Naive thymus-derived CD4-positive, alpha-beta T cell (primary cell): ENCODE measurements at regions of chr17 and their contacts with region 1.

Region 1: GRCh38 chr17:42388381-42389134 is at the start of gene STAT3:
- DNase-seq: peak; percentile 100
- ATAC-seq: peak; percentile 93
- H3K4me3 ChIP-seq: peak within 1 kb of the TSS; percentile 65
- H3K4me3 Mint-ChIP-seq: peak within 1 kb of the TSS; percentile 87 to 99 (median 96)
- H3K27ac ChIP-seq: peak within 1 kb of the TSS; percentile 94
- H3K27ac Mint-ChIP-seq: peak within 1 kb of the TSS; percentile 99 to 100 (median 100)
- H3K4me1 ChIP-seq: peaks cover 13 to 20% of the 10 kb centered on the region in 2 donors
- H3K4me1 Mint-ChIP-seq: peaks cover 35 to 59% (median 48%) of the 10 kb centered on the region in 7 donors
- H3K27me3 ChIP-seq: no peaks in the 10 kb centered on the region
- H3K27me3 Mint-ChIP-seq: peaks cover 0 to 3% (median 0%) of the 10 kb centered on the region in 5 donors
- total RNA-seq, gene STAT3: 133 to 275 (median 231) TPM

Region 2: DNA sequence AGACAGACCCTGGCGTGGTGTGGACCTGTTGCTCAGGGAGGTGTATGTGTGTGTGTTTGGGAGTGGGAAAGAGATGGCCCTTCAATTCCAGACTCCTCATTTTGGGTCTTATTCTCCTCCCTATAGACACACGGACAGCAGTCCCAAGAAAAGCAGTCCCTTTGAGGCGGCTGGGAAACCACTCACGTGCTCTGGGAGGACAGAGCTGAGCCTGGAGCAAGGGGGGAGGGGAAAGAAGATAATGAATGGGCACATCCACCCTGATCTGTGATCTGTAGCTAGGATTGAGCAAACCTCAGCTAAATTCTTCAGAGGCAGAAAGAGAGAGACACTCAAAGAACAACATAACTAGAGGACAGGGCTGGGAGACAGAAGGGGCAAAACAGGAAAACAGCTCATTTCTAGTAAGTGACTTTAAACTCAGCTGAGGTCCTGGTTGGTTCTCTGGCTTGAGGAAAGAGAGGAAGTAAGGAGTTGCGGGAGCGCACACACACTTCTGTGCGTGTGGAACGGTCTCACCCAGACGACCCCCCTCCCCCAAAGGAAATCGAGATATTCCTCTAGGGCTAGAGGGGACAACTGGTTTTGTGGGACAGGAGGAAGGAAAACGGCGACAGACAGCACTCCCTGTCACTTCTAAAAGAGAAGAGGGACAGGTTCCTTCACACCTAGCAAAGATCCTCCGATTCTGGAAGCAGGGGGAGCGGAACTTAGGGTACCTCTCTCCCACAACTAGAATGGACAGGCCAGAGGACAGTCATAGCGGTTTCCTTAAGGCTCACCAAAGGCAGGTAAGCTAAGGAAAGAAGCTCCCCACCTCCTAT is 234.4 kb before region 1 on chr17:
- CTCF ChIA-PET with region 1: no interaction called
- POLR2A ChIA-PET with region 1: no interaction called
- intact Hi-C with region 1: loop called in 1 of 2 experiments (anchors 1 kb)
- DNase-seq: no peak
- ATAC-seq: no peak
- H3K4me3 ChIP-seq: peak overlapping the region; percentile 76
- H3K4me3 Mint-ChIP-seq: peak overlapping the region; percentile 81 to 97 (median 94)
- H3K27ac ChIP-seq: peak overlapping the region; percentile 94
- H3K27ac Mint-ChIP-seq: peak overlapping the region; percentile 79 to 96 (median 93)
- H3K4me1 ChIP-seq: peaks cover 10 to 16% of the 10 kb centered on the region in 2 donors
- H3K4me1 Mint-ChIP-seq: peaks cover 21 to 43% (median 37%) of the 10 kb centered on the region in 7 donors
- H3K27me3 ChIP-seq: no peaks in the 10 kb centered on the region
- H3K27me3 Mint-ChIP-seq: no peaks in the 10 kb centered on the region

Region 3: GRCh38 chr17:42276359-42276608 is 112.3 kb before region 1 on chr17 and contains the start of gene STAT5B:
- CTCF ChIA-PET with region 1: no interaction called
- POLR2A ChIA-PET with region 1: interaction called, 7 read pairs
- intact Hi-C with region 1: loop called in 1 of 2 experiments (anchors 2 kb)
- DNase-seq: peak in 8 of 9 donors; percentile 52 to 82 (median 73)
- ATAC-seq: peak; percentile 84
- H3K4me3 ChIP-seq: peak within 1 kb of the TSS; percentile 93
- H3K4me3 Mint-ChIP-seq: peak within 1 kb of the TSS; percentile 95 to 100 (median 98)
- H3K27ac ChIP-seq: peak within 1 kb of the TSS; percentile 90
- H3K27ac Mint-ChIP-seq: peak within 1 kb of the TSS; percentile 91 to 99 (median 97)
- H3K4me1 ChIP-seq: peaks cover 30 to 32% of the 10 kb centered on the region in 2 donors
- H3K4me1 Mint-ChIP-seq: peaks cover 34 to 56% (median 50%) of the 10 kb centered on the region in 7 donors
- H3K27me3 ChIP-seq: no peaks in the 10 kb centered on the region
- H3K27me3 Mint-ChIP-seq: no peaks in the 10 kb centered on the region
- total RNA-seq, gene STAT5B: 143 to 192 (median 183) TPM

Region 4: DNA sequence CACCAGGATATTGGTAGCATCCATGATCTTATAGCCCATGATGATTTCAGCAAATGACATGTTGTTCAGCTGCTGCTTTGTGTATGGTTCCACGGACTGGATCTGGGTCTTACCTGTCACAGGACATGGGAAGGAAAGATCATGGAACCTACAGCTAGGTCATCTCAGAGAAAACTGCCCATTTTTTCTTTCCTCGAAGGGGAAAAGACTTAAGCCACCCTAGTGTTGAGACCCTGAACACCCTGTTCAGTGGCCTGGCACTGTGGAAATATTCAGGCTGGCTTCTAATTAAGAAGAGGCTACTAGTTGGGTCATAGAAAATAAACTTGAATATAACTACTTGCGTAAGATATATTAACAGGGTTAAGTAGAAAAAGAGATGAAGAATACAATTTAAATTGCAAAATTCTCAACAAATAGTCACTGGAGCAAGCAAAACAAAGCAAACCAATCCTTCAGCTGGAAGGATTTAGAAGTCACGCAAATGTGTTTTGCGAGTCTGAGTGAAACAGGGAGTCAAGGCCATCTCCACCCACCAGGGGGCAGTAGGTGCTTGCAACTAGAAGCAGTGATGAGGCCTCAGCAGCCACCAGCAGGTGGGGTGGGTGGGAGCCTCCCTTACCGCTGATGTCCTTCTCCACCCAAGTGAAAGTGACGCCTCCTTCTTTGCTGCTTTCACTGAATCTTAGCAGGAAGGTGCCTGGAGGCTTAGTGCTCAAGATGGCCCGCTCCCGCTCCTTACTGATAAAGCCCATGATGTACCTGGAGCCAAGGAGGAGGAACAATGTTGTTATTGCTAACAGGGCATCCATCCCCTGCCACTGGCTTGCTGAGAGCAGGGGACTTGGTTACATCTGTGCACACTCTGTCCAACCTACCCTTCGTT is 65.9 kb before region 1 on chr17:
- CTCF ChIA-PET with region 1: interaction called, 8 read pairs
- POLR2A ChIA-PET with region 1: interaction called, 10 read pairs
- intact Hi-C with region 1: loop called (anchors 1 kb)
- DNase-seq: peak; percentile 80 to 95 (median 93)
- ATAC-seq: peak; percentile 100
- H3K4me3 ChIP-seq: no peak overlapping the region
- H3K4me3 Mint-ChIP-seq: peak overlapping the region in 3 of 10 donors; percentile 19 to 45 (median 27)
- H3K27ac ChIP-seq: peak overlapping the region; percentile 40
- H3K27ac Mint-ChIP-seq: peak overlapping the region; percentile 42 to 91 (median 80)
- H3K4me1 ChIP-seq: peaks cover 3 to 23% of the 10 kb centered on the region in 2 donors
- H3K4me1 Mint-ChIP-seq: peaks cover 19 to 55% (median 43%) of the 10 kb centered on the region in 7 donors
- H3K27me3 ChIP-seq: no peaks in the 10 kb centered on the region
- H3K27me3 Mint-ChIP-seq: no peaks in the 10 kb centered on the region

Region 5: GRCh38 chr17:42399948-42400843 is 11.6 kb after region 1 on chr17:
- CTCF ChIA-PET with region 1: interaction called, 11 read pairs
- POLR2A ChIA-PET with region 1: interaction called, 51 read pairs
- intact Hi-C with region 1: no loop called
- DNase-seq: no peak
- ATAC-seq: no peak
- H3K4me3 ChIP-seq: no peak overlapping the region
- H3K4me3 Mint-ChIP-seq: peak overlapping the region in 6 of 10 donors; percentile 26 to 66 (median 38)
- H3K27ac ChIP-seq: no peak overlapping the region
- H3K27ac Mint-ChIP-seq: peak overlapping the region in 6 of 9 donors; percentile 30 to 84 (median 61)
- H3K4me1 ChIP-seq: peaks cover 0 to 10% of the 10 kb centered on the region in 2 donors
- H3K4me1 Mint-ChIP-seq: peaks cover 9 to 37% (median 13%) of the 10 kb centered on the region in 7 donors
- H3K27me3 ChIP-seq: no peaks in the 10 kb centered on the region
- H3K27me3 Mint-ChIP-seq: peaks cover 0 to 3% (median 0%) of the 10 kb centered on the region in 5 donors

Region 6: GRCh38 chr17:42459256-42459800 is 70.8 kb after region 1 on chr17:
- CTCF ChIA-PET with region 1: interaction called, 3 read pairs
- POLR2A ChIA-PET with region 1: interaction called, 3 read pairs
- intact Hi-C with region 1: loop called (anchors 1 to 5 kb)
- DNase-seq: peak in 6 of 9 donors; percentile 10 to 27 (median 16)
- ATAC-seq: no peak
- H3K4me3 ChIP-seq: peak overlapping the region; percentile 86
- H3K4me3 Mint-ChIP-seq: peak overlapping the region; percentile 88 to 97 (median 92)
- H3K27ac ChIP-seq: peak overlapping the region; percentile 66
- H3K27ac Mint-ChIP-seq: peak overlapping the region; percentile 68 to 95 (median 92)
- H3K4me1 ChIP-seq: peaks cover 36 to 39% of the 10 kb centered on the region in 2 donors
- H3K4me1 Mint-ChIP-seq: peaks cover 24 to 47% (median 40%) of the 10 kb centered on the region in 7 donors
- H3K27me3 ChIP-seq: no peaks in the 10 kb centered on the region
- H3K27me3 Mint-ChIP-seq: peaks cover 0 to 20% (median 0%) of the 10 kb centered on the region in 5 donors

Region 7: GRCh38 chr17:43388359-43389045 is 999.9 kb after region 1 on chr17:
- CTCF ChIA-PET with region 1: no interaction called
- POLR2A ChIA-PET with region 1: no interaction called
- intact Hi-C with region 1: loop called in 1 of 2 experiments (anchors 5 kb)
- DNase-seq: peak; percentile 92 to 98 (median 95)
- ATAC-seq: peak; percentile 84
- H3K4me3 ChIP-seq: peak overlapping the region; percentile 94
- H3K4me3 Mint-ChIP-seq: peak overlapping the region; percentile 91 to 99 (median 96)
- H3K27ac ChIP-seq: peak overlapping the region; percentile 95
- H3K27ac Mint-ChIP-seq: peak overlapping the region; percentile 95 to 100 (median 98)
- H3K4me1 ChIP-seq: peaks cover 4 to 15% of the 10 kb centered on the region in 2 donors
- H3K4me1 Mint-ChIP-seq: peaks cover 16 to 39% (median 31%) of the 10 kb centered on the region in 7 donors
- H3K27me3 ChIP-seq: no peaks in the 10 kb centered on the region
- H3K27me3 Mint-ChIP-seq: no peaks in the 10 kb centered on the region